Activated CD8-positive, alpha-beta T cell treated with anti-CD3 and anti-CD28 coated beads, Interleukin-2, amount 10 ng/mL, durations not matched to agents 7 days and 5 days (primary cell): ENCODE measurements at regions of chr3 and their contacts with region 1.

Region 1: GRCh38 chr3:17841190-17841828 is 98.9 kb upstream of the TBC1D5 start:
- DNase-seq: peak; percentile 79
- ATAC-seq: peak; percentile 89
- H3K4me3 Mint-ChIP-seq: no peak overlapping the region
- H3K27ac Mint-ChIP-seq: no peak overlapping the region
- H3K4me1 Mint-ChIP-seq: no peaks in the 10 kb centered on the region
- H3K27me3 Mint-ChIP-seq: peaks cover 6% of the 10 kb centered on the region

Region 2: DNA sequence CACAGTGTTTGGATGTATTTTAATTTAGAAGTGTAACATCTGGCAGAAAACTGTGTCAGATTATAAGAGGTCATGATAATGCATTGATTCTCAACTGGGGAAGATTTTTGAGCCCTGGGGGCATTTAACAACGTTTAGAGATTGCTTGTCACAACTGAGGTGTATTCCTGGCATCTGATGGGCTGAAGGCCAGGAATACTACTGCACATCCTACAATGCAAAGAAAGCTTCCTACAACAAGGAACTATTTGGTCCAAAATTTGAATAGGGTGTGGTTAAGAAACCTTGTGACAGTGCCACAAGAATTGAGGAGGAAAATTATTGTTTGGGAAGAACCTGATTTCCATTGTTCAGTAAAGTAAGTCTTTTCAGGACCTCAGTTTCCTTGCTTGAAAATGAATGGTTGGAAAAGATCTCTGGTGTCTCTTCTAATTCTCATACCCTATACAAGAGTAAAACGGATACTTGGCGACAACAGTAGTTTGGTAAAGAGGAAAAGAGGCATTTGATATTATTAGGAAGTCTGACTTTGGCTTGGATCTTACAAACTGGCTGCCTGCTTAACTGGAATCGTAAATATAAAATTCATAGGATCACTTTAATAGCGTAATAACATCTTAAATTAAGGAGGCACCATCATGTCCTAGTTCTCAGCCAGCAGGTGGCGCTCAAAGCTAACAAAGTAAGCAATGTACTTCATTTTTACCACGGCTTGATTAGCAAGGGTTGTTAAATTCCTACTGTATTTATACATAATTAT is 1240.3 kb before region 1 on chr3:
- CTCF ChIA-PET with region 1: interaction called, 13 read pairs
- POLR2A ChIA-PET with region 1: no interaction called
- DNase-seq: peak; percentile 87
- ATAC-seq: peak; percentile 55
- H3K4me3 Mint-ChIP-seq: no peak overlapping the region
- H3K27ac Mint-ChIP-seq: no peak overlapping the region
- H3K4me1 Mint-ChIP-seq: peaks cover 29% of the 10 kb centered on the region
- H3K27me3 Mint-ChIP-seq: peaks cover 22% of the 10 kb centered on the region

Region 3: GRCh38 chr3:17423786-17424536 is 417.3 kb before region 1 on chr3:
- CTCF ChIA-PET with region 1: interaction called, 38 read pairs
- POLR2A ChIA-PET with region 1: no interaction called
- DNase-seq: no peak
- ATAC-seq: no peak
- H3K4me3 Mint-ChIP-seq: no peak overlapping the region
- H3K27ac Mint-ChIP-seq: no peak overlapping the region
- H3K4me1 Mint-ChIP-seq: no peaks in the 10 kb centered on the region
- H3K27me3 Mint-ChIP-seq: no peaks in the 10 kb centered on the region

Region 4: DNA sequence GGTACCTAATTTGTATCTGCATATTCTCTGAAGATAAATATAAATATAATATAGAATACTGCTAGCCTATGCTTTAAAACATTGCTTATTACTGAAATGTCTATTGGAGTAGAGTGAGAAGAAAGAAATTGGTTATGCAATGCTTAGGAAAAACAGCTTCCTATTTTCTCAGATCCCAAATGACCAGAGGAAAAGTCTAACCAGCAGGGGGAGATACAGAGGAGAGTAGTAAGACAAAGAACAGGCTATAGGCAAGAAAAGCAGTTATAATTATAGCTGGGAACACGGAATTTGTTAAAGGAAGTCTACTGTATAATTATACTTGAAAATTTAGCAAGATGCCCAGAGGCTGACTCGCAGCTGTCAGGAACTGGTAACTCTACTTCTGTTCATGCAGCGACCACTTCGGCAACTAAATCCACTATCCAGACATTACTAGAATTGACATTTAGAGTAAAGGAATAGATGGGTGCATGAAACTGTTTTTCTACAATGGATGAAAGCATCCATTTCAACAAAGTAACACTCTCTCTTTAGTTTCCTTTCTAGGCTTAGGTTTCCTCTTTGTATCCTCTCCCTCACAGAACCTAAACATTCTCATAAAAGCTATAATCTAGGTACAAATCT is 196.1 kb before region 1 on chr3:
- CTCF ChIA-PET with region 1: interaction called, 44 read pairs
- POLR2A ChIA-PET with region 1: no interaction called
- DNase-seq: no peak
- ATAC-seq: no peak
- H3K4me3 Mint-ChIP-seq: no peak overlapping the region
- H3K27ac Mint-ChIP-seq: no peak overlapping the region
- H3K4me1 Mint-ChIP-seq: no peaks in the 10 kb centered on the region
- H3K27me3 Mint-ChIP-seq: no peaks in the 10 kb centered on the region

Region 5: GRCh38 chr3:17825298-17825697 is 16.0 kb before region 1 on chr3:
- CTCF ChIA-PET with region 1: interaction called, 32 read pairs
- POLR2A ChIA-PET with region 1: no interaction called
- DNase-seq: no peak
- ATAC-seq: no peak
- H3K4me3 Mint-ChIP-seq: no peak overlapping the region
- H3K27ac Mint-ChIP-seq: no peak overlapping the region
- H3K4me1 Mint-ChIP-seq: no peaks in the 10 kb centered on the region
- H3K27me3 Mint-ChIP-seq: peaks cover 29% of the 10 kb centered on the region

Region 6: DNA sequence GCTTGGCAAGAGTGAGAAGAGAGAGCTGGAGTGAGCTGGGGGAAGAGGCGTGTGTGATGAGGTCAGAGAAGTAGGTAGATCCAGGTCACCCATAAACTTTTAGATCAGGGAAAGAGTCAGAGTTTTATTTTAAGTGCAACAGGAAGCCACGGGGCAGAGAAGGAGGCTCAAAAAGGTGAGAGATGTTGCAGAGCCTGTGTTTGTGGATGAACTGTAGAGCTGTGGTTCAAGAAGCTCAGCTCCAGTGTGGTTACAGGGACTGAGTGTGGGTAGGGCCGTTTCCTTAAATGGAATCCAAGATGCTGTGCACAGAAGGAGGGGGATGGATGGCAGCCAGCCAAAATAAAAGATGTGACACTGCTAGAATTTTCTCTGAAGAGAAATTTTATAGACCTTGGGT is 246.7 kb after region 1 on chr3:
- CTCF ChIA-PET with region 1: no interaction called
- POLR2A ChIA-PET with region 1: no interaction called
- DNase-seq: peak; percentile 54
- ATAC-seq: peak; percentile 69
- H3K4me3 Mint-ChIP-seq: no peak overlapping the region
- H3K27ac Mint-ChIP-seq: peak overlapping the region; percentile 36
- H3K4me1 Mint-ChIP-seq: peaks cover 21% of the 10 kb centered on the region
- H3K27me3 Mint-ChIP-seq: peaks cover 6% of the 10 kb centered on the region